Gastrocnemius medialis (tissue), 4 donors: ENCODE measurements at regions of chr12 and their contacts with region 1.

Region 1: DNA sequence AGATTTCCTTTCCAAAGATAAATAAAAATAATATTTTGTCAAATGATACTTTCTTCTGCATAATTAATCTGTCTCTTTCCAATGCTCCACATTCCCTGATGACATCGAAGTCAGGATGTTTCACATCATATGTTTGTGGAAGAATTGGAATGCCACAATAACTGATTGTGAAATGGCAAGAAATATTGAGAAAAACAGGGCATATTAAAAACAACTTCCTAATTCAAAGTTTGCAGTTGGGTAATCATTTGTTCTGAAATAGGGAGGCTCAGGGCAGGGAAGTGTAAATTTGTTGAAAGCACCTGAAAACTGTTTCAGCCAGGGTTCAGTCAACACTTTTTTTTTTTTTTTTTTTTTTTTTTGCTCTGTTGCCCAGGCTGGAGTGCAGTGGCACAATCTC is 50.7 kb downstream of the BCAT1 start:
- DNase-seq: no peak
- ATAC-seq: peak in 1 of 2 donors; percentile 48
- H3K4me3 ChIP-seq: no peak overlapping the region
- H3K27ac ChIP-seq: no peak overlapping the region
- H3K4me1 ChIP-seq: no peaks in the 10 kb centered on the region
- H3K27me3 ChIP-seq: peaks cover 0 to 13% (median 11%) of the 10 kb centered on the region in 3 donors
- CTCF ChIP-seq: no peak
- POLR2A ChIP-seq: no peak

Region 2: GRCh38 chr12:24840046-24840800 is 58.0 kb before region 1 on chr12:
- in situ Hi-C with region 1: no loop called
- intact Hi-C with region 1: loop called (anchors 5 kb)
- DNase-seq: no peak
- ATAC-seq: peak in 1 of 2 donors; percentile 20
- H3K4me3 ChIP-seq: no peak overlapping the region
- H3K27ac ChIP-seq: peak overlapping the region in 1 of 4 donors; percentile 53
- H3K4me1 ChIP-seq: peaks cover 0 to 5% of the 10 kb centered on the region in 2 donors
- H3K27me3 ChIP-seq: no peaks in the 10 kb centered on the region
- CTCF ChIP-seq: no peak
- POLR2A ChIP-seq: no peak